Activated CD4-positive, alpha-beta memory T cell treated with anti-CD3 and anti-CD28 coated beads for 36 hours (primary cell): ENCODE measurements at regions of chr19 and their contacts with region 1.

Region 1: DNA sequence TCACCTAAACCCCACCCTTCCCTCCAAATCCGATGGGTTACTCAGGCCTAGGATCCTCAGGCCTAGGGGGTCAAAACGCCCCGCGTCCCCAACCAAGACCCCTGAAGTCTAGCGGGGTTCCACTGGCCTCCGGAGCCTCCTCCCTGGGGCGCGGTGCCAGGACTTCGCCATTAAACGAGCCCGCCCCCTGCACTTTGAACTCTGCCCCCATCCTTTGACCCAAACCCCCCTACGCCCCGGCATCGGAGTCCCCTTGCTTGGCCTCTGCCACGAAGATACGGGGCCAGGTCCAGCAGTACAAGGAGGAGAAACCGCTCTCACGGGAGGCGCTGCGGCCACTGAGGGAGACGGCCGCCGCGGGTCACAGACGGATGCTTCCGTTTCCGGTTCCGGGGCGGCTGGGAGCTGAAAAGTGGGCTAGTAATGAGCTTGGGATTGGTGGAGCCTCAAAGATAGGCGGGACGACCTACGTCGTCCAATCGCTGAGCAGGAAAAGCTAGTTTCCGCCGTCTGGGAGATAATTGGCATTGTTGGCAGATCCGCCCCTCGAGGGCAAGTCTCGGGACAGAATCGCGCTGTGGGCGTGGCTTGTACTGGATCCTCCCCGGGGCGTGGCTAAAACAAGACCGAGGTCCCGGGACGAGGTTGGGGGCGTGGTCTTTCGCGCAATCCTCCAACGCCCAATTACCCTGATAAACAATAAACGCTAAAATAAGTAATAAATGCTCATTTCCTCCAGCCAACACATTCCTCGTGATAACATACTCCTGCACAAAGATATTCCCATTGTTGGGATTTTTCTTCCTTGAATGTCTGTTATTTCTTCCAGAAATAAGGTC is 5.7 kb upstream of the ZNF77 start:
- DNase-seq: peak; percentile 100
- H3K4me3 Mint-ChIP-seq: peak overlapping the region; percentile 98
- H3K27ac Mint-ChIP-seq: peak overlapping the region; percentile 97
- H3K4me1 Mint-ChIP-seq: peaks cover 25% of the 10 kb centered on the region
- H3K27me3 Mint-ChIP-seq: no peaks in the 10 kb centered on the region

Region 2: GRCh38 chr19:2827840-2828489 is 122.5 kb before region 1 on chr19:
- CTCF ChIA-PET with region 1: no interaction called
- POLR2A ChIA-PET with region 1: no interaction called
- intact Hi-C with region 1: no loop called
- DNase-seq: no peak
- H3K4me3 Mint-ChIP-seq: no peak overlapping the region
- H3K27ac Mint-ChIP-seq: no peak overlapping the region
- H3K4me1 Mint-ChIP-seq: no peaks in the 10 kb centered on the region
- H3K27me3 Mint-ChIP-seq: no peaks in the 10 kb centered on the region

Region 3: DNA sequence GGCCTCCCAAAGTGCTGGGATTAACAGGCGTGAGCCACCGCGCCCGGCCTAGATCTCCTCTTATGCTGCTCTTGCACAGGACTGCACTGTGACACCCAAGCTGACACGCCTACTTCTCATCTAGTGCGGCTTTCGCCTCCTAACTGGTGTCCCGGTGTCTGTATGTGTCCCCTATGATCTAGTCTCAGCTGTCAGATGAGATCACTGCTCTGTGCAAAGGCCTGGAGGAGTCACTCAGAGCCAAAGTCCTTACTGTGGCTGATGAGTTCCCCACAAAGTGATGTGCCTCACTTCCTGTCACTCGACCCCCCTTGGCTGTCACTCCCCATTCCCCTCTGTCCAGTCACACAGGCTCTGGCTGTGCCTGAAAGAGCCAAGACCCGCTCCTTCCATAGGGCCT is 80.9 kb before region 1 on chr19:
- CTCF ChIA-PET with region 1: no interaction called
- POLR2A ChIA-PET with region 1: no interaction called
- intact Hi-C with region 1: no loop called
- DNase-seq: no peak
- H3K4me3 Mint-ChIP-seq: no peak overlapping the region
- H3K27ac Mint-ChIP-seq: no peak overlapping the region
- H3K4me1 Mint-ChIP-seq: no peaks in the 10 kb centered on the region
- H3K27me3 Mint-ChIP-seq: peaks cover 5% of the 10 kb centered on the region

Region 4: DNA sequence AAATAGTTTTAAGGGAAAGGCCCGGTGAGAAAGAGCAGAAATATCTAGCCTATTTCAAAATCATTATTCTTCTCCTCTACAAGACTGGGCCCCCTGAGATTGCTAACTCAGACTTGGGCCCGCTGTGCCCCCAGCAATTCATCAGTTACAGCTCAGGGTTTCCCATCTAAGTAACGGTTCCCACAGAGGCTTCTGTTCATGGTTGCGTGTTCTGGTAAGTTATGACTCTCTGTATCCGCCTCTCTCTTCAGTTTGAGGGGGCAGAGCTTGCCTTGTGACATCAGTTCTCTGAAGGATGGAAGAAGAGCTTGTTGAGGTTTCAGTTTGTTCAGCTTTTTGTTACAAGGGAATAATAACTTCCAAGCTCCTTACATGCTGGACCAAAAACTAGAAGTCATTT is 38.2 kb before region 1 on chr19:
- CTCF ChIA-PET with region 1: interaction called, 21 read pairs
- POLR2A ChIA-PET with region 1: interaction called, 5 read pairs
- intact Hi-C with region 1: no loop called
- DNase-seq: peak; percentile 71
- H3K4me3 Mint-ChIP-seq: peak overlapping the region; percentile 58
- H3K27ac Mint-ChIP-seq: peak overlapping the region; percentile 94
- H3K4me1 Mint-ChIP-seq: peaks cover 43% of the 10 kb centered on the region
- H3K27me3 Mint-ChIP-seq: no peaks in the 10 kb centered on the region

Region 5: DNA sequence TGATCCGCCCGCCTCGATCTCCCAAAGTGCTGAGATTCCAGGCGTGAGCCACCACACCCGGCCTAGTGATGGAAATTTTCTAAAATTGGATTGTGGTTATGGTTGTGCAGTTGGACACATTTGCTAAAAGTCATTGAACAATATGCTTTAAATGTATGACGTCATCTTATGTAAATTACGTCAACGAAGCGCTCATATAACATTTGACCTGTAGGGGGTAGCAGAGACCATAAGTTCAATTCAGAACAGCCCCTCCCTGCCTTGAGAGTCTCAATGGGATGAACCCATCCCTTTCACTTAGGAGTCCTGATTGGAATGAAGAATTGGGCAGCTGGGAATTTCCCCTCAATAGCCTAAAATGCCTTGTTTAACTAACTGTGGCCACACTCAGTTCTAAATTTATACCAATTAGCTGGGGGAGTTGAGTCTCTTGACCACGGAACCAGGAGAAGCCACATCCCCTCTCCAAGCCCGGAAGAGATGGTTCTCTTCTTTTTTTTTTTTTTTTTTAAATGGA is 11.6 kb after region 1 on chr19:
- CTCF ChIA-PET with region 1: interaction called, 17 read pairs
- POLR2A ChIA-PET with region 1: no interaction called
- intact Hi-C with region 1: no loop called
- DNase-seq: peak; percentile 46
- H3K4me3 Mint-ChIP-seq: peak overlapping the region; percentile 31
- H3K27ac Mint-ChIP-seq: peak overlapping the region; percentile 24
- H3K4me1 Mint-ChIP-seq: peaks cover 2% of the 10 kb centered on the region
- H3K27me3 Mint-ChIP-seq: no peaks in the 10 kb centered on the region

Region 6: GRCh38 chr19:2977001-2977685 is 26.6 kb after region 1 on chr19 and contains the start of gene TLE6:
- CTCF ChIA-PET with region 1: interaction called, 13 read pairs
- POLR2A ChIA-PET with region 1: no interaction called
- intact Hi-C with region 1: no loop called
- DNase-seq: peak; percentile 97
- H3K4me3 Mint-ChIP-seq: peak within 1 kb of the TSS; percentile 89
- H3K27ac Mint-ChIP-seq: peak within 1 kb of the TSS; percentile 72
- H3K4me1 Mint-ChIP-seq: peaks cover 13% of the 10 kb centered on the region
- H3K27me3 Mint-ChIP-seq: peaks cover 7% of the 10 kb centered on the region
- total RNA-seq, gene TLE6: 2.5 to 2.6 TPM

Region 7: DNA sequence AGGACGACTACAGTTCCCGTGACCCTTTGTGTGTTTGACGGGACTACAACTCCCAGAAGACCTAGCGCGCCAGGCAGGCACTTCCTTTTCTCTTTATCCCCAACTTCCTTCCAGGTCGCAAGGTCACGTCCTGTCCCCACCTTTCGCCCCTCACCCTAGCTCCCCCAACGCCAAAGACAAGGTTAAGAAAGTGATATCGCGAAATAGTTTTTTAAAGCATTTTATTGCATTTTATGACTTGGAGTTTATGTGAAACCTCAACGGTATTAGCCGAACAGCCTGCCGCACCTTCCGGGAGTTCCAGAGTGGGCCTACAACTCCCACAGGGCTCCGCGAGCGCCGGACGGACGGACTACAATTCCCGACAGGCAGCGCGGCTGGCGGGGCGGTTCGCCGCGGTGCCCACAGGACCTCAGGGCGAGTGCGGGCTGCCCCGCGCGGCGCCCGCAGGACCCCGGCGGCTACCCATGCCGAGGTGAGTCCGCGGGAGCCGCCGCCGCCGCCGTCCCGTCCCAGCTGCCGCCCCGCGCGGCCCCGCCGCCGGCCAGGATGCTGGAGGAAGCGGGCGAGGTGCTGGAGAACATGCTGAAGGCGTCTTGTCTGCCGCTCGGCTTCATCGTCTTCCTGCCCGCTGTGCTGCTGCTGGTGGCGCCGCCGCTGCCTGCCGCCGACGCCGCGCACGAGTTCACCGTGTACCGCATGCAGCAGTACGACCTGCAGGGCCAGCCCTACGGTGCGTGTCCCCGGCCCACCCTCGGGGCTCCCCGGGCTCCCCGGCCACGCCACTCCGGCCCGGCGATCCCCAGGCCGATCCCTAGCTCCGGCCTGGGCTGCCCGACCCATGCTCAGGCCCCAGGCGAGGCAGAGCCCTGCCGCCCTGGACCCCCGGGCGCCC is 235.2 kb after region 1 on chr19 and contains the start of gene NCLN:
- CTCF ChIA-PET with region 1: interaction called, 4 read pairs
- POLR2A ChIA-PET with region 1: no interaction called
- intact Hi-C with region 1: loop called (anchors 2 kb)
- DNase-seq: peak; percentile 94
- H3K4me3 Mint-ChIP-seq: peak within 1 kb of the TSS; percentile 97
- H3K27ac Mint-ChIP-seq: peak within 1 kb of the TSS; percentile 99
- H3K4me1 Mint-ChIP-seq: peaks cover 57% of the 10 kb centered on the region
- H3K27me3 Mint-ChIP-seq: no peaks in the 10 kb centered on the region
- total RNA-seq, gene NCLN: 47.0 to 50.9 TPM